CD8-positive, alpha-beta memory T cell (primary cell): ENCODE measurements at regions of chr11 and their contacts with region 1.

Region 1: DNA sequence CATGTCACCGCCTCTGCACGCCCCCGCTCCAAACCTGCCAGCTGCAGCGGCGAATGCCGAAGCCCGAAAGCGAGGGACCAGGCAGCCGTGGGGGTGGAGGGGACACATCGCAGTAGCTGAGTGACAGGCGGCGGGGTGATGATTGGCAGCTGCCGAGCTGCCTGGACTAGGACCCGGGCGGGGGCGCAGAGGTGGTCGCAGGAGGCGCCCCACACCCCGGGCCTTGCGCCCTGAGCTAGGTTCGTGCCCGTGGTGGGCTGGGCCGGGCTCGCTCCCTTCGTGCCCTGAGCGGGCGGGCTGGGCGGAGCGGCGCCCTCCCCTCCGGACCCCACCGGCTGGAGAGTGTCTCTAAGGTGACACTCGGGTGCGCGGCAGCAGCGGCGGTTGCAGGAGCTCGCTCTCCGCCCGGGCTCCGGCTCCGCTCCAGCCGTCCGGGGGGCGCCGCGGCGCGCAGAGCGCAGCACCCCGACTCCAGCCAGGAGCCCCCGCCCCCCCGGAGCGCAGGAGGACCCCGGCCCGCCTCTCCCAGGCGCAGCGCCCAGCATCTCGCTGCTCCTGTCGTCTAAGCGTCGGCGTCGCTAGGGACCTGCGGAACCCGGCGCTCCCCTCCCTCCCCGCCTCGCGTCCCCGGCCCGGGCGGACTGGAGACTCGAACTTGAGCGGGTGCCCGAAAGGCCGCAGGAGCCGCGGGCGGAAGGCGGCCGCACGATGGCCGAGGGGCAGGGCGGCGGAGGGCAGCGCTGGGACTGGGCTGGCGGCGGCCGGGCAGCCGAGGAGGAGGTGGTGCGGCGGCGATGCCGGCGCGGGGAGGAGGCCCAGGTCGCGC is 14.5 kb upstream of the DGKZ start:
- DNase-seq: peak in 2 of 5 donors; percentile 16 to 67
- H3K4me3 ChIP-seq: peak overlapping the region; percentile 64
- H3K4me3 Mint-ChIP-seq: peak overlapping the region; percentile 52 to 84 (median 74)
- H3K27ac ChIP-seq: no peak overlapping the region
- H3K27ac Mint-ChIP-seq: peak overlapping the region in 4 of 8 donors; percentile 12 to 73 (median 38)
- H3K4me1 ChIP-seq: peaks cover 56% of the 10 kb centered on the region
- H3K4me1 Mint-ChIP-seq: peaks cover 29 to 41% (median 35%) of the 10 kb centered on the region in 3 donors
- H3K27me3 ChIP-seq: no peaks in the 10 kb centered on the region
- H3K27me3 Mint-ChIP-seq: peaks cover 29 to 41% of the 10 kb centered on the region in 2 donors

Region 2: DNA sequence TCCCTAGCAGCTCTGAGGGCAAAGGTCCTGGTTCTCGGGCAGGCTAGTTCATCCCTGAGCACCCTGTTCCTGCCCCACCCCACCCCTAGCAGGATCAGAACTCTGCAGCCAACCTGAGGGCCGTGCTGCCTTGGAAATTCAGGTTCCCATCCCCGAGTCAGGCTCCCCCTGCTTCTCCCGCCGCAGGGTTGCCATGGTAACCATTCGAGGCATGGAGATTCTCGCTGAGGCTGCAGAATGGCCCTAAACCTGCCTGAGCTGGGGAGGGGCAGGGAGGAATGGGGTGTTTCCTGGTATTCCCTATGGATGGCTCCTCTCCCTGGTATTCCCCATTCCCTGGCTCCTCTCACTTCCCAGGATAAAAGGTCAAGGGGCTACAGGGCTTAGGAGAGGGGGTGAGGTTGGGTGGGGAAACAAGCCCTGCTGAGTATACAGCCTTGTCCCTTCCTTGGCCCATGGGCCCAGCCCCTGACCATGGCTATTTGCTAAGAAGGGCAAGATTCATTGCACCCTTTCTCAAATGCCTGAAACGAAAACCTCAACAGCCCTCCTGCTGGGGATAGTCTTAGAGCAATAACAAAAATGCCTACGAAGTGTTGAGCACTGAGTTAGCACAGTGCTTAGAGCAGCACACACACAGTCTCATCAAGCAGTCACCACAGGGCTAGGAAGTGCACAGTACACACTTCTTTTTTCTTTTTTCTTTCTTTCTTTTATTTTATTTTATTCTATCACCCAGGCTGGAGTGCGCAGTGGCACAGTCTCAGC is 726.1 kb before region 1 on chr11:
- CTCF ChIA-PET with region 1: no interaction called
- POLR2A ChIA-PET with region 1: no interaction called
- DNase-seq: no peak
- H3K4me3 ChIP-seq: no peak overlapping the region
- H3K4me3 Mint-ChIP-seq: no peak overlapping the region
- H3K27ac ChIP-seq: no peak overlapping the region
- H3K27ac Mint-ChIP-seq: no peak overlapping the region
- H3K4me1 ChIP-seq: no peaks in the 10 kb centered on the region
- H3K4me1 Mint-ChIP-seq: no peaks in the 10 kb centered on the region
- H3K27me3 ChIP-seq: no peaks in the 10 kb centered on the region
- H3K27me3 Mint-ChIP-seq: peaks cover 16 to 63% of the 10 kb centered on the region in 2 donors

Region 3: GRCh38 chr11:46308631-46309419 is 24.0 kb before region 1 on chr11:
- CTCF ChIA-PET with region 1: interaction called, 63 read pairs
- POLR2A ChIA-PET with region 1: no interaction called
- DNase-seq: peak; percentile 36 to 73 (median 50)
- H3K4me3 ChIP-seq: no peak overlapping the region
- H3K4me3 Mint-ChIP-seq: no peak overlapping the region
- H3K27ac ChIP-seq: no peak overlapping the region
- H3K27ac Mint-ChIP-seq: no peak overlapping the region
- H3K4me1 ChIP-seq: peaks cover 4% of the 10 kb centered on the region
- H3K4me1 Mint-ChIP-seq: peaks cover 0 to 5% (median 5%) of the 10 kb centered on the region in 3 donors
- H3K27me3 ChIP-seq: no peaks in the 10 kb centered on the region
- H3K27me3 Mint-ChIP-seq: peaks cover 4 to 10% of the 10 kb centered on the region in 2 donors

Region 4: GRCh38 chr11:46346886-46347636 is 14.3 kb after region 1 on chr11 and contains the start of gene DGKZ:
- CTCF ChIA-PET with region 1: interaction called, 67 read pairs
- POLR2A ChIA-PET with region 1: interaction called, 32 read pairs
- DNase-seq: peak; percentile 87 to 97 (median 93)
- H3K4me3 ChIP-seq: peak within 1 kb of the TSS; percentile 95
- H3K4me3 Mint-ChIP-seq: peak within 1 kb of the TSS; percentile 89 to 98 (median 96)
- H3K27ac ChIP-seq: peak within 1 kb of the TSS; percentile 63
- H3K27ac Mint-ChIP-seq: peak within 1 kb of the TSS; percentile 70 to 98 (median 94)
- H3K4me1 ChIP-seq: peaks cover 80% of the 10 kb centered on the region
- H3K4me1 Mint-ChIP-seq: peaks cover 62 to 78% (median 69%) of the 10 kb centered on the region in 3 donors
- H3K27me3 ChIP-seq: no peaks in the 10 kb centered on the region
- H3K27me3 Mint-ChIP-seq: peaks cover 0 to 3% of the 10 kb centered on the region in 2 donors
- total RNA-seq, gene DGKZ: 85.8 to 87.2 TPM

Region 5: DNA sequence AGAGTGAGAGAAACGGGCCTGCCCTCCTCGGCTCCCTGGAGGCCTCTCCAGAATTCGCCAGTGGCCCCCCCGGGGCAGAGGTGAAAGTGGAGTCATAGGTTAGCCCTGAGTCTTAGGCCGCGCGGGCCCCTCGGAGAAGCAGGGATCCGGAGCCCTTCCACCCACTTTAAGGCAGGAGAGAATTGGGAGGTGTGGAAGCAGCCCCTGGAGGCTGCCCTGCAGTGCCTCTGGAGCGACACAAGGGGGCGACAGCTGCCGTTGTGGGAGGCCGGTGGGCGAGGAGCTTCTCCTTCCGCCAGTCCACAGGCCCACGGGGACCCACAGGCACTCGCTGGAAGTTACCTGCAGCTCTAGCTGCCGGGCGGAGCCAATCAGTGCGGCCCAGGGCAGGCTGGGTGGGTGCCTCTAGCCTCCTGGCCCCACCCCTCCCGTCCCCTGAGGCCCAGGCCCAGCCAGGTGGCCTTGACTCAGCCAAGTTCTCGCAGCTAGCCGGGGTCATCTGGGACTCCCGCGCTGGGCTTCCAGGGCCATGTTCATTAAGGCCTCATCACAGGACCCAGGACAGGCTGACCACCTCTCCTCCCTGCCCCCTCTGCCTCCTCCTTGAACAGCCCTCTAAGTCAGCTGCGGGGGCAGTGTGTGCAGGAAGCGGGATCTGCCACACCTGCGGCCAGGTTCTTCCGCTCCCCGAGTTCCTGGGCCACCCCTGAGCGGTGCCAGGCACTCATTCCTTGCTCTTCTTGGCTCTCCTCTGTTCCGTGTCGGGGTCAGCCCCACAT is 19.5 kb after region 1 on chr11:
- CTCF ChIA-PET with region 1: interaction called, 67 read pairs
- POLR2A ChIA-PET with region 1: interaction called, 32 read pairs
- DNase-seq: peak; percentile 74 to 88 (median 78)
- H3K4me3 ChIP-seq: peak overlapping the region; percentile 66
- H3K4me3 Mint-ChIP-seq: peak overlapping the region; percentile 80 to 98 (median 92)
- H3K27ac ChIP-seq: peak overlapping the region; percentile 49
- H3K27ac Mint-ChIP-seq: peak overlapping the region; percentile 87 to 98 (median 92)
- H3K4me1 ChIP-seq: peaks cover 74% of the 10 kb centered on the region
- H3K4me1 Mint-ChIP-seq: peaks cover 75 to 83% (median 80%) of the 10 kb centered on the region in 3 donors
- H3K27me3 ChIP-seq: no peaks in the 10 kb centered on the region
- H3K27me3 Mint-ChIP-seq: no peaks in the 10 kb centered on the region